K562 (cell line): ENCODE measurements at regions of chr11 and their contacts with region 1.

Region 1: DNA sequence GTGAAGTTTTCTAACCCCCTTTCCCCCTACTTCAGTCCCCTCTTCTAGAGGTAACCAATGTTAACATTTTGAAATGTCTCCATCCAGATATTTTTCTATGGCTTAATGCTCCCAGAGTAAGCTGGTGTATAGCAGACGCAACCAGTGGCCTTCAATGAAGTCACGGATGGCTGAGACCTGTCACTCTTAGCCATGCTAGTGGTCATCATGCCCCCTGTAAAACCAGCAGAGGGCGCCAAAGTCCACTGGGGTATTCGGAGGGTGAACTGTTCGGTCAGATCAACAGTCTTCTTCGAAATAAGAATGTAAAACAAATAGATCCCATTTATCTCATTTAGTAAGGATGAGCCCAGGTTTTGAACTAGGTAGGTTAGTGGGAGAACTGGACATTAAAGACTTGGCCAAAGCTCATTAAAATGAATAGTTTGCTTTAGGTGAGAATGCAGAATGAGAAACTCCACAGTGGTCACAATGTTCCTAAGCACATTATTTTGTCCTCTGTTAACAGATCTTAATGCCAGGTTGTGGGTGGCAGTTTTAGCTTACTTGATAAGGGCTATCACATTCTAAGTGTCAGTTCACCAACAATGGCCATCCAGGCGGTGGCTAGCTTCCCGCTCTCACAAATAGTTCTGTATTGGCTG is 8.6 kb upstream of the MMP8 start:
- DNase-seq: peak; percentile 67 to 78 (median 71)
- ATAC-seq: peak; percentile 100
- H3K4me3 ChIP-seq: no peak overlapping the region
- H3K27ac ChIP-seq: no peak overlapping the region
- H3K4me1 ChIP-seq: no peaks in the 10 kb centered on the region
- H3K27me3 ChIP-seq: no peaks in the 10 kb centered on the region
- CTCF ChIP-seq: peak; percentile 76 to 88 (median 86)
- EP300 ChIP-seq: no peak
- POLR2A ChIP-seq: no peak
- RAD21 ChIP-seq: peak; percentile 79 to 80

Region 2: DNA sequence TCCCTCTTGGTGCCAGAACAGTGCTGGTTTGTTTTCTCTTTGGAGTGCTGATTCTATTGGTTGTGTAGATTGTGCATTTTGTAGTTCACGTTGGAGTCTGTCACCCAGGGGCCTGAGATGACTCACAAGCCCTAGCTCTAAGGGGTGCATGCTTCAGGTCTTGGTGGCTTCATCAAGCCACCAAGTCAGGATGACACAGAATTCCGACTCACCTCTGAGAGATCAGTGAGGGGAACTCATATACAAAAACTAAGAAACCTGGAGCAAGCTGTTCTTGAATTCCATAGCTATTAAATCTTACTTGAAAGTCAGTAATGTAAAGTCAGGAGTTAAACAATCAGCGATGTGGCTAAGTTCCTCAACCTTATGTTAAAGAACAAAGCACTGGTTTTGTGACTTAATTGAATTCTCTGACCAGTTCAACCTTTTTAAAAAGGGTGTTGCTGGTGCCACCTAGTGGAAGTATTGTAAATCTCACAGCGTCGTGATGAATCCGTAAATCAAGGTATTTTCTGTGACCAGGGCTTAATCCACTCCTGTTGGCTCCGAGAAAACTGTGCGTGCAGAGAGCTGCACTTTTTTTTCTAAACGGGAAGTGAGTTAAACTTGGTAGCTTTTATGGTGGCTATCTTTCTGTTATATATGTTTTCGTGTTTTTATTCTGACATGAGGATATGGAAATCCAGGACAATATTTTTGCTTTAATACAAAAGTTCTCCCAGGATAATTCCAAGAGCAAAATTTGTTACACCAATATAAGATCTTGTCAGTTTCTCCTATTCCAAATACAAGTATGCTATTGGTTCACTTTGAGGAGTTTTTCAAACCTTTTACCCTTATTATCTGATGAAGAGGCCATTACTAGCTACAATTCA is 207.6 kb after region 1 on chr11:
- CTCF ChIA-PET with region 1: interaction called, 13 read pairs
- POLR2A ChIA-PET with region 1: no interaction called
- in situ Hi-C with region 1: no loop called
- intact Hi-C with region 1: loop called (anchors 1 kb)
- DNase-seq: peak; percentile 44 to 63 (median 56)
- ATAC-seq: peak; percentile 91
- H3K4me3 ChIP-seq: no peak overlapping the region
- H3K27ac ChIP-seq: no peak overlapping the region
- H3K4me1 ChIP-seq: no peaks in the 10 kb centered on the region
- H3K27me3 ChIP-seq: no peaks in the 10 kb centered on the region
- CTCF ChIP-seq: peak; percentile 58 to 72 (median 70); a peak in 5 of 6 replicates
- EP300 ChIP-seq: no peak
- POLR2A ChIP-seq: no peak
- RAD21 ChIP-seq: peak; percentile 55 to 66

Region 3: GRCh38 chr11:103601225-103601846 is 868.0 kb after region 1 on chr11:
- CTCF ChIA-PET with region 1: no interaction called
- POLR2A ChIA-PET with region 1: no interaction called
- in situ Hi-C with region 1: no loop called
- intact Hi-C with region 1: loop called (anchors 5 kb)
- DNase-seq: peak; percentile 25 to 55 (median 41)
- ATAC-seq: peak; percentile 60; the same call in 2 of the 3 replicates
- H3K4me3 ChIP-seq: no peak overlapping the region
- H3K27ac ChIP-seq: no peak overlapping the region
- H3K4me1 ChIP-seq: no peaks in the 10 kb centered on the region
- H3K27me3 ChIP-seq: no peaks in the 10 kb centered on the region
- CTCF ChIP-seq: peak; percentile 48 to 57 (median 55); a peak in 5 of 6 replicates
- EP300 ChIP-seq: no peak
- POLR2A ChIP-seq: no peak
- RAD21 ChIP-seq: peak; percentile 49 to 60